ENCODE measurements at regions of chr10 and their contacts with region 1.

Region 1: DNA sequence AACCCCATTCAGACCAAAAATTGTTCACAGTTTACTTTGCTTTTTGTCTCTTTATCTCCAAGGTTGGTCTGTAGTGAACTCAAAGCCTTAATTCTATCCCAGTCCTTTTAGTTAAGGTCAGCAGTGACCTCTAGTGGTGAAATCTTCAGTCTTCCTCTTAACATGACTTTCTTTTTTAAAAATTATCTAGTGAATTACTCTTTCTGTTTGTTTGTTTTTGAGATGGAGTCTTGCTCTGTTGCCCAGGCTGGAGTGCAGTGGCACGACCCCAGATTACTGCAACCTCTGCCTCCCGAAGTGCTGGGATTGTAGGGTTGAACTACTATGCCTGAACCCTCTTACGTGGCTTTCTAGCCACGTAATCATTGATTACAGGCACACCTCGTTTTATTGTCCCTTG is 25.0 kb downstream of the ZNF487 start:
- DNase-seq: peak; percentile 75
- H3K4me3 ChIP-seq: no peak overlapping the region
- H3K27ac ChIP-seq: no peak overlapping the region
- H3K4me1 ChIP-seq: no peaks in the 10 kb centered on the region
- H3K27me3 ChIP-seq: no peaks in the 10 kb centered on the region
- CTCF ChIP-seq: peak; percentile 49 to 56
- POLR2A ChIP-seq: no peak

Region 2: DNA sequence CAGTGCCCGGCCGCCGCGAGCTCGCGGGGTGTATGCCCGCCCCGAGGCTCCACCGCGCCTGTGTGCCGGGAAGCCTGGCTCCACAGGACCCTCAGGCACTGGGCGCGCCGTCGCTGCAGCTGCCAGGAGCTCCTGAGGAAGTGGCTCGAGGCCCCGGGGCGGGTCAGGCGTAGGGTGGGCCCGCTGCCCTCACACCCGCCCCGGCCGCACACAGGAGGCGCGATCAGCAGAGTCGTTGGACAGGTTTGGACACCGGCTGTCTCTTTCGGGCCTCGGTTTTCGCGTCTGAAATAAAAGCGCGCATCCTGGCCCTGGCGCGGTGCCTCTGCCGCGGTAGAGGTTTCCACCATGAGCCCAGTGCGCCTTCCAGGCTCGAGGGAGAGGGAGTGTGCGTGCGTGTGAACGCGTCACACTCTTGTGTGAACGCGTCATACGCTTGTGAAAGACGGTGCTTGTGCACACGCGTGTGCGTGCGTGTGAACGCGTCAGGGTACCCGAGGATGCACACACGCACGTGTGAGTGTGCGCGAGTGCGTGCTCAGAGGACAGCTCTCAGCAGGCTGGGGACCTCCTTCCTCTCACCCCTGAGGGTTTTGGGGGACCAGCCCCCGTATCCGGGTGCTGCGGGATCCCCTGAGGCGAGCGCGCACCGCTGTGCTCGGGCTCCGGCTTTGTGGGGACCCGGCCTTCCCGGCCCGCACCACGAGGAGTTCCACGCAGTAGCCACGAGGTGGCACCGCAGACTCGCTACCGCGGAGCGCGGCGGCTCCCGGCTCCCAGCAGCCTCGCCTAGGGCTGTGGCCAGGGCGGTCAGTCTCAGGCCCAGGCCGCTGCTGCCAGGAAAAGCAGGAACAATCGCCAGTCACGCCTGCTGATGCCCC is 595.6 kb before region 1 on chr10:
- CTCF ChIA-PET with region 1: no interaction called
- POLR2A ChIA-PET with region 1: no interaction called
- dilution Hi-C with region 1: no loop called
- intact Hi-C with region 1: loop called (anchors 2 kb)
- DNase-seq: peak; percentile 65
- H3K4me3 ChIP-seq: no peak overlapping the region
- H3K27ac ChIP-seq: no peak overlapping the region
- H3K4me1 ChIP-seq: peaks cover 2% of the 10 kb centered on the region
- H3K27me3 ChIP-seq: peaks cover 6 to 21% of the 10 kb centered on the region in 2 experiments
- CTCF ChIP-seq: peak; percentile 52 to 87
- POLR2A ChIP-seq: no peak

Region 3: DNA sequence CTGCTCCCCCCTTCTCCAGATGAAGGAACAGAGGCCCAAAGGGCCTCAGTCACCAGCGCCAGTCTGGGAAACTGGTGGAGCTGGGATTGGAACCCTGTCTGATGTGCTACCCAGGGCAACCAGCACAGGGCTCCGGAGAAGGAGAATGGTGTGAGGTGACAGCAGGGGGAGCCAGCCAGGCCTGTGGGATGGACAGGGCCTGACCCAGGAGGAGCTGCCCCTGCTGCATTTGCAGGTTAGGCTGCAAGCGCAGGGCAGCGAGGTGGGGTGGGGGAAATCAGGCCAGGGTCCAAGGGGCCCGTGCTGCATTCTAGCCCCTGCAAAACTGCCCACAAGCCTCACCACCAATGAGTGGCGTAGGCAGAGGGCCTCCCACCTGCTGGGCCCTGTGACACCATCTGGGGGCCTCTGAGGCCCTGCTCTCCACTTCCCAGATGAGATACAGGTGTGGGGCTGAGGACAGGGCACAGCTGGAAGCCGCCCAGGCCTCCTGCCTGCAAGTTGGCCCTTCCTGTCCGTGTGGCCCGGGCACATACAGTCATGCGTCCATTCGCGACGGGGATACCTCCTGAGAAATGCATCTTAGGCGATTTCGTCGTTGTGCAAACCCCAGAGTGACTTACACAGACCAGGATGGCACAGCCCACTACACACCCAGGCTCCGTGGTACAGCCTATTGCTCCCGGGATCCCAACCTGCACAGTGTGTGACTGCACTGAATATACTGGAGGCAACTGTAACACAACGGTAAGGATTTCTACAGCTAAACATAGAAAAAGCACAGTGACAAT is 240.3 kb before region 1 on chr10:
- CTCF ChIA-PET with region 1: no interaction called
- POLR2A ChIA-PET with region 1: no interaction called
- dilution Hi-C with region 1: no loop called
- intact Hi-C with region 1: loop called (anchors 2 kb)
- DNase-seq: no peak
- H3K4me3 ChIP-seq: no peak overlapping the region
- H3K27ac ChIP-seq: no peak overlapping the region
- H3K4me1 ChIP-seq: no peaks in the 10 kb centered on the region
- H3K27me3 ChIP-seq: peaks cover 2 to 3% of the 10 kb centered on the region in 2 experiments
- CTCF ChIP-seq: peak in 1 of 2 donors; percentile 18
- POLR2A ChIP-seq: no peak

Region 4: DNA sequence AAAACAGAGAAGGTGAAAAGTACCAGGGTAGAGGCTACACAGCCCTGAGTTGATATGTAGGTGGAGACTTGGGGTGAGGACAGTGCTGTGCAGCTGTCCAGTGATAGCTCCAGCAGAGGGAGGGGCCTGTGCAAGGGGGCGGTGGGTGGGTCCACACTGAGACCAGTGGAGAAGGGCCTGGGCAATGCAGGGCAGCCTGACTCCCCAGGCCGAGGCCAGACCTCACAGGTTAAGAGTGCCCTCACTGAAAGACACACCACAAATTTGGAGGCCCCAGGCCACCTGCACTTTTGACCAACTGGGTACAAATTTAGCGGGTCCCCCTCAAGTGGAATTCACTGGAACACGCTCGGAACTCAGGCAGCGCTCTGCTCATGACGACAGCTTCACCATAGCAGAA is 188.4 kb before region 1 on chr10:
- CTCF ChIA-PET with region 1: no interaction called
- POLR2A ChIA-PET with region 1: no interaction called
- dilution Hi-C with region 1: no loop called
- intact Hi-C with region 1: no loop called
- DNase-seq: no peak
- H3K4me3 ChIP-seq: no peak overlapping the region
- H3K27ac ChIP-seq: no peak overlapping the region
- H3K4me1 ChIP-seq: no peaks in the 10 kb centered on the region
- H3K27me3 ChIP-seq: peaks cover 1 to 8% of the 10 kb centered on the region in 2 experiments
- CTCF ChIP-seq: no peak
- POLR2A ChIP-seq: no peak

Region 5: GRCh38 chr10:43292755-43293676 is 168.9 kb before region 1 on chr10:
- CTCF ChIA-PET with region 1: interaction called, 70 read pairs
- POLR2A ChIA-PET with region 1: no interaction called
- dilution Hi-C with region 1: no loop called
- intact Hi-C with region 1: loop called (anchors 1 kb)
- DNase-seq: peak; percentile 47
- H3K4me3 ChIP-seq: no peak overlapping the region
- H3K27ac ChIP-seq: no peak overlapping the region
- H3K4me1 ChIP-seq: peaks cover under 1% of the 10 kb centered on the region
- H3K27me3 ChIP-seq: peaks cover 0 to 4% of the 10 kb centered on the region in 2 experiments
- CTCF ChIP-seq: peak; percentile 59 to 65
- POLR2A ChIP-seq: no peak

Region 6: DNA sequence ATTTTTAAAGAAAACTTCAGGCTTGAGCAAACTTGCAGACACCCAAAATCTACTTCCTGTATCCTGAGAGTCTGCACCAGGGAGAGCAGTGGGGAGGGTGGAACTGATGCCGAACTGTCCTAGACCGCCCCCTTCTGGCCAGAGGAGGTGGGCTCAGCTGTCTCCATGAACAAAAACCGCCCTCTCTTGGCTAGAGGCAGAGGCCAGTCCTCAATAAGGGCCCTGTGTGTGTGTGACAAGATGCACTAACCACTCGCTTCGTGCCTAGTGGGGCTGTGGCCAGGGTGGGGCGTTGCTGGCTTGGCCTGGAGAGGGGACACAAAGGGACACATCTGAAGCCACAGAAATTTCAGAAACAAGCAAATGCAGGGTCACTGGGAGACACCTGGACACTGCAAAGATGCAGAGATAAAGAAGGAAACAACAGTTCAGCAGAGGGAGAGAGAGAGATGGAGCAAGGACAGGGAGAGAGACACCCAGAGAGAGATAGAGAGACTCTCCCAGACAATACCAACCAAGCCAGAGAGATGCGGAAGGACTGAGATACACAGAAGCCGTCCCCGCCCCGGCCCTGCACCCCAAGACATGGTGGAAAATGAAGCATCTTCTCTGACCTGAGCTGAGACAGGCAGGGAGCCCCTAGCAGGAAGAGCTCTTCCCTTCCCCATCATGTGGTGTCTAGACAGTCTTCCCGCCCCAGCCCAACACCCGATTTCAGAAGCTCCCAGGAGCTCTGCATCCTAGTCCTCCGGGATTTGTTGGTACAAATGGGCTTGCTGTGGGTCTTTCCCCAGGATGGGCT is 113.2 kb before region 1 on chr10:
- CTCF ChIA-PET with region 1: no interaction called
- POLR2A ChIA-PET with region 1: no interaction called
- dilution Hi-C with region 1: no loop called
- intact Hi-C with region 1: loop called (anchors 1 kb)
- DNase-seq: peak; percentile 67
- H3K4me3 ChIP-seq: no peak overlapping the region
- H3K27ac ChIP-seq: no peak overlapping the region
- H3K4me1 ChIP-seq: no peaks in the 10 kb centered on the region
- H3K27me3 ChIP-seq: peaks cover 1 to 7% of the 10 kb centered on the region in 2 experiments
- CTCF ChIP-seq: peak; percentile 94
- POLR2A ChIP-seq: no peak

Region 7: DNA sequence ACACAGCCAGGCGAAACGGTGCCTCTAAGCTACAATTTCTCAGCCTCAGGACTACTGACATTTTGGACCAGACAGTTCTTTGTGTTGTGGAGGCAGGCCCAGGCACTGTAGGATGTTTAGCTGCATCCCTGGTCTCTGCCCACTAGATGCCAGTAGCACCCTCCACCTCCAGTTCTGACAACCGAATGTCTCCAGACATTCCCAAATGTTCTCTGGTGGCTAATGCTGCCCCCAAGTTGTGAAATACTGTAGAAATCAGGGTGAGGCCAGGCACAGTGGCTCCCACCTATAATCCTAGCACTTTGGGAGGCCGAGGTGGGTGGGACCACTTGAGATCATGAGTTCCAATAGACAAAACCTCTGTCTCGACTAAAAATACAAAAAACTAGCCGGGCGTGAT is 71.2 kb before region 1 on chr10:
- CTCF ChIA-PET with region 1: interaction called, 17 read pairs
- POLR2A ChIA-PET with region 1: no interaction called
- dilution Hi-C with region 1: no loop called
- intact Hi-C with region 1: loop called (anchors 1 kb)
- DNase-seq: peak; percentile 30
- H3K4me3 ChIP-seq: no peak overlapping the region
- H3K27ac ChIP-seq: no peak overlapping the region
- H3K4me1 ChIP-seq: peaks cover 15% of the 10 kb centered on the region
- H3K27me3 ChIP-seq: no peaks in the 10 kb centered on the region
- CTCF ChIP-seq: peak; percentile 51 to 67
- POLR2A ChIP-seq: no peak

Region 8: GRCh38 chr10:43436400-43437140 is 25.4 kb before region 1 on chr10 and contains the start of gene ZNF487:
- CTCF ChIA-PET with region 1: no interaction called
- POLR2A ChIA-PET with region 1: no interaction called
- dilution Hi-C with region 1: no loop called
- intact Hi-C with region 1: no loop called
- DNase-seq: peak; percentile 90
- H3K4me3 ChIP-seq: peak within 1 kb of the TSS; percentile 22 to 84 (median 66)
- H3K27ac ChIP-seq: peak within 1 kb of the TSS; percentile 92
- H3K4me1 ChIP-seq: peaks cover 3% of the 10 kb centered on the region
- H3K27me3 ChIP-seq: no peaks in the 10 kb centered on the region
- CTCF ChIP-seq: peak in 1 of 2 donors; percentile 30
- POLR2A ChIP-seq: peak; percentile 27
- total RNA-seq, gene ZNF487: 2.6 and 3.0 TPM in 2 replicates